ENCODE measurements at regions of chr3 and their contacts with region 1.

Region 1: GRCh38 chr3:49856181-49857005 is at the start of gene TRAIP:
- DNase-seq: peak; percentile 93
- H3K4me3 Mint-ChIP-seq: peak within 1 kb of the TSS; percentile 97
- H3K27ac Mint-ChIP-seq: peak within 1 kb of the TSS; percentile 93
- H3K4me1 Mint-ChIP-seq: peaks cover 18% of the 10 kb centered on the region
- H3K27me3 Mint-ChIP-seq: no peaks in the 10 kb centered on the region
- total RNA-seq, gene TRAIP: 26.5 and 27.9 TPM in 2 replicates

Region 2: DNA sequence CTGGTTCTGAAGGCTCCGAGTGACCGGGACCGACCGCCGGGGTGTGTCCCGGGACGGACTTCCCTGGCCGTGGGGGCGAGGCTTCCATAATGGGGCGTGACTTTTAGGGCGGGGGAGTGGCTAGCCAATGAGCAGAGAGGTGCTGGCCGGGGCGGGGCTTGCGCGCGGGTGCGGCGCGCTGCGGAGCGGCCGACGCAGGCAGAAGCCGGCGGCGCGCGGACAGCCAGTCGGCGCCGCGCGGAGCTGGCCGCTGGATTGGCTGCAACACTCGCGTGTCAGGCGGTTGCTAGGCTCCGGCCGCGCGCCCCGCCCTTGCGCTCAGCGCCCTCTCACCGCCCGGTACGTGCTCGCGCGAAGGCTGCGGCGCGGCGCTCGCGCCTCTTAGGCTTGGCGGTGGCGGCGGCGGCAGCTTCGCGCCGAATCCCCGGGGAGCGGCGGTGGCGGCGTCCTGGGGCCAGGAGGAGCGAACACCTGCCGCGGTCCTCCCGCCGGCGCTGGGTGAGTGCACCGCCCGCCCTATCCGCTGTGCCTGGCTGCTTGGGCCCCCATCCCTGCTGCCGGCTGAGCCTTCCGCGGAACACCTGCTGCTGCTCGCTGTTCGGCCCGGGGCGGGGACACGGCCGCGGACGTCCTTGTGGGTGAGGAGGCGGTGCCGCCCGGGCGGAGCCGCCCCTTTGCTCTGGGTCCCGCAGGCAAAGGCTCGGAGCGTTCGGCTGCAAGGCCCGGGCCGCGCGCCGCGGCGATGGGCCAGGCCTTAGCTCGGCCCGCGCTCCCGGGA is 386.3 kb before region 1 on chr3 and contains the start of gene DAG1:
- intact Hi-C with region 1: loop called (anchors 1 kb)
- DNase-seq: peak; percentile 96
- H3K4me3 Mint-ChIP-seq: peak within 1 kb of the TSS; percentile 92
- H3K27ac Mint-ChIP-seq: peak within 1 kb of the TSS; percentile 88
- H3K4me1 Mint-ChIP-seq: peaks cover 23% of the 10 kb centered on the region
- H3K27me3 Mint-ChIP-seq: no peaks in the 10 kb centered on the region
- total RNA-seq, gene DAG1: 20.5 and 23.7 TPM in 2 replicates

Region 3: GRCh38 chr3:49786241-49786958 is 70.0 kb before region 1 on chr3 and contains the start of gene IP6K1:
- intact Hi-C with region 1: loop called (anchors 1 kb)
- DNase-seq: peak; percentile 100
- H3K4me3 Mint-ChIP-seq: peak within 1 kb of the TSS; percentile 92
- H3K27ac Mint-ChIP-seq: peak within 1 kb of the TSS; percentile 94
- H3K4me1 Mint-ChIP-seq: peaks cover 26% of the 10 kb centered on the region
- H3K27me3 Mint-ChIP-seq: peaks cover 8% of the 10 kb centered on the region
- total RNA-seq, gene IP6K1: 49.3 and 52.4 TPM in 2 replicates

Region 4: DNA sequence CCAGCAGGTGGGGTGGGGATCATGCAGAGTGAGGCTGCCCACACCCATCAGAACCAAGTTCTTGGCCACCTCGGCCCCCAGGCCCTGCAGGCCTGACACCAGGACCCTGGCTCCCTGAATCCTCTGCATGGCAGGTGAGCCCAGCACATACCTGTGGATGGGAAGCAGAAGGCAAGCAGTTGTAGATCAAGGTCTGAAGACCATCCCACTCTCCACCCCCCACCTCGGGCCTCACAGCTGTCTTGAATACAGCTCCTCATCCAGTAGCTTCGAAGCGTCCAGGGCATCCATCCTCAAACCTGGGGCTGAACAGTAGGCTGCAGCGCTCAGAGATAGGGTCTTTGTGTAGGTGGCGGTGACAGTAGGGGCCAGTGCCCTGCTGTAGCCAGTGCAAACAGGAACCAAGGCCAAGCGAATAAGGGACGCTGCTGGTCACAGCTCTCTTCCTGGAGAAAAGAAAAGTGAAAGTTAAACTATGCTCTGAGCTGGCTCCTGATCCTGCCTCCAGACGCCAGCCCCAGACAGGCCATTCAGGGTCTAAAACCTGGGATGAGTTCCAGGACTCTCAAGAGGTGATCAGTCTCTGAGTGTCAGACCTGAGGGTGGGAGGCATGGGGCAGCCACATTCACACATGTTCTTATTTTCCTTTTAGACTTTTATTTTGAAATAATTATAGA is 42.8 kb before region 1 on chr3 and contains the start of gene UBA7:
- intact Hi-C with region 1: loop called (anchors 1 kb)
- DNase-seq: peak; percentile 40
- H3K4me3 Mint-ChIP-seq: peak within 1 kb of the TSS; percentile 94
- H3K27ac Mint-ChIP-seq: peak within 1 kb of the TSS; percentile 94
- H3K4me1 Mint-ChIP-seq: peaks cover 27% of the 10 kb centered on the region
- H3K27me3 Mint-ChIP-seq: no peaks in the 10 kb centered on the region
- total RNA-seq, gene UBA7: 90.3 and 97.5 TPM in 2 replicates

Region 5: GRCh38 chr3:49906004-49906743 is 49.8 kb after region 1 on chr3:
- intact Hi-C with region 1: loop called (anchors 1 kb)
- DNase-seq: peak; percentile 29
- H3K4me3 Mint-ChIP-seq: peak overlapping the region; percentile 16
- H3K27ac Mint-ChIP-seq: peak overlapping the region; percentile 57
- H3K4me1 Mint-ChIP-seq: peaks cover 32% of the 10 kb centered on the region
- H3K27me3 Mint-ChIP-seq: no peaks in the 10 kb centered on the region

Region 6: DNA sequence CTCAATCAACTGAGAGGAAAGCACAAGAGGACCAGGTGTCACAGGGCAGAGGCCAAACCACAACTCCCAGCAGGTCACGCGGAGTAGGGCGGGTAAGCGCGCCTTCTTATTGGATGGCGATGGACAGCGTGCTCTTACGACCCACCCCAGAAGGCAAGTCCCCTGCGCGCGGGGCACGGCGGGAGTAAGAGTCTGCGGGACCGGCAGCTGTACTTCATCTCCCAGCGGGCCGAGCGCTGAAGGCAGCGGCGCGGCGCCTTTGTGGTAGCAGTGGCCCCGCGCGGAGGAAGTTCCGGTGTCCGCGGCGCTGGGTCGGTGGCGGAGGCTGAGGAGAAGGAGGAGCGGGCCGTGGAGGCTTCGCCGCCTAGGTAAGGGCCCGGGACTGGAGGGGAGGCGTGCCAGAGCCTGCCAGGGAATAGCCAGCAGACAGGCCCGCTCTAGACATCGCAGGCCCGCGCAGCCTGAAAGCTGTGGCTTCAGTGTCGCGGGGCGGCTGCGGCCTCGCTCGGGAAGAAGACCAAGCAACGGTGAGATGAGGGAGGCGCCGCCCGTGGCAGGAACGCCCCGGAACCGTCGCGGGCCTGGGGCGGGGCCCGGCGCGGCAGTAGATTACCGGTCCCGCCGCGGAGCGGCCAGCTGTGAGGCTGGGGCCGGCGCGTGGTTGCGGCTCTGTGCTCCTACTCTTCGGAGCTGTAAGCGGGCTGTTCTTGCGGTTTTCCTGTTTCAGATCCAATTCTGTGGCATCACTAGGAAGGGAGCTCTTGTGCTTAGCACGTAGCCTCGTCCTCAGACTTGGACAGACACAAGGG is 83.7 kb after region 1 on chr3 and contains the start of gene RBM6:
- intact Hi-C with region 1: loop called (anchors 1 kb)
- DNase-seq: peak; percentile 95
- H3K4me3 Mint-ChIP-seq: peak within 1 kb of the TSS; percentile 97
- H3K27ac Mint-ChIP-seq: peak within 1 kb of the TSS; percentile 98
- H3K4me1 Mint-ChIP-seq: peaks cover 22% of the 10 kb centered on the region
- H3K27me3 Mint-ChIP-seq: no peaks in the 10 kb centered on the region
- total RNA-seq, gene RBM6: 99.0 and 100 TPM in 2 replicates

Region 7: DNA sequence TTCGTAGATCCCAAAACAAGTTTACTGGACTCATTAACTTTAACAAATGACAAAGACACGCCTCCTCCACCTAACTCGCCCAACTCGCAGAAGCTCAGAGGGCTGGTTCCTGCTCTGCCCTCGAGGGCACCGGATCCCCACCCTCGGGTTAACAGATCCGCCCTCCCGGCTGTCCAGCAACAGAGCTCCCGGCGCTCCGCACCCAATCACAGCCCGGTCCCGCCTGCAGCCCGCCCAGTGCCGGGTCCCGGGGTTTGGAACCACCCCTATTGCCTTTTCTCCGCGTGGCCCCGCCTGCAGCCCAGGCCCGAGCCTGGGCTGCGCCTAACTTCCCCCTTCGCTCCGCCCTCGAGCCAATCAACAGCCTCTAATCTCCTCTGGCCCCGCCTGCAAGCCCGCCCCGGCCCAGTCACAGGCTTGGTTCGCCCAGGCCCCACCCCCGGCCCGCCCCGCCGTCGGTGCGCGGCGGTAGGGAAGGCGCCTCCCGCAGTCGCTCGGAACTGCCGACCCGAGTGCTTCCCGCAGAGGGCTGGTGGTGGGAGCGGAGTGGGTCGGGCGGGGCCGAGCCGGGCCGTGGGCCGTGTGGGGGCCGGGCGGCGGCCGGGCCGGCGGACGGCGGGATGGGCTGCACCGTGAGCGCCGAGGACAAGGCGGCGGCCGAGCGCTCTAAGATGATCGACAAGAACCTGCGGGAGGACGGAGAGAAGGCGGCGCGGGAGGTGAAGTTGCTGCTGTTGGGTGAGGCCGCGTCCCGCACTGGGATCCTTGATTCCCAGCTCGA is 379.5 kb after region 1 on chr3 and contains the start of gene GNAI2:
- intact Hi-C with region 1: loop called (anchors 2 kb)
- DNase-seq: peak; percentile 99
- H3K4me3 Mint-ChIP-seq: peak within 1 kb of the TSS; percentile 99
- H3K27ac Mint-ChIP-seq: peak within 1 kb of the TSS; percentile 94
- H3K4me1 Mint-ChIP-seq: peaks cover 32% of the 10 kb centered on the region
- H3K27me3 Mint-ChIP-seq: no peaks in the 10 kb centered on the region
- total RNA-seq, gene GNAI2: 237 and 238 TPM in 2 replicates

Measured in activated T-helper 1 cell treated with anti-CD3 and anti-CD28 coated beads, Interleukin-12 subunit alpha, Interleukin-12 subunit beta, Interleukin-2, Interleukin-4 antibody, amounts not matched to agents 30 ng/mL and 10 ng/mL and 1 ng/mL, durations not matched to agents 14 hours and 24 hours and 36 hours (primary cell).